Ovary (tissue), 10 donors: ENCODE measurements at regions of chr16 and their contacts with region 1.

Region 1: GRCh38 chr16:22297114-22297878 is at the start of gene POLR3E:
- DNase-seq: peak; percentile 99 to 100 (median 100)
- H3K4me3 ChIP-seq: peak within 1 kb of the TSS; percentile 95
- H3K27ac ChIP-seq: peak within 1 kb of the TSS; percentile 75 to 81
- H3K4me1 ChIP-seq: no peaks in the 10 kb centered on the region
- H3K27me3 ChIP-seq: no peaks in the 10 kb centered on the region
- CTCF ChIP-seq: peak; percentile 82 to 99 (median 99)
- EP300 ChIP-seq: no peak
- POLR2A ChIP-seq: peak; percentile 9
- total RNA-seq, gene POLR3E: 23.5 to 57.0 (median 40.8) TPM

Region 2: DNA sequence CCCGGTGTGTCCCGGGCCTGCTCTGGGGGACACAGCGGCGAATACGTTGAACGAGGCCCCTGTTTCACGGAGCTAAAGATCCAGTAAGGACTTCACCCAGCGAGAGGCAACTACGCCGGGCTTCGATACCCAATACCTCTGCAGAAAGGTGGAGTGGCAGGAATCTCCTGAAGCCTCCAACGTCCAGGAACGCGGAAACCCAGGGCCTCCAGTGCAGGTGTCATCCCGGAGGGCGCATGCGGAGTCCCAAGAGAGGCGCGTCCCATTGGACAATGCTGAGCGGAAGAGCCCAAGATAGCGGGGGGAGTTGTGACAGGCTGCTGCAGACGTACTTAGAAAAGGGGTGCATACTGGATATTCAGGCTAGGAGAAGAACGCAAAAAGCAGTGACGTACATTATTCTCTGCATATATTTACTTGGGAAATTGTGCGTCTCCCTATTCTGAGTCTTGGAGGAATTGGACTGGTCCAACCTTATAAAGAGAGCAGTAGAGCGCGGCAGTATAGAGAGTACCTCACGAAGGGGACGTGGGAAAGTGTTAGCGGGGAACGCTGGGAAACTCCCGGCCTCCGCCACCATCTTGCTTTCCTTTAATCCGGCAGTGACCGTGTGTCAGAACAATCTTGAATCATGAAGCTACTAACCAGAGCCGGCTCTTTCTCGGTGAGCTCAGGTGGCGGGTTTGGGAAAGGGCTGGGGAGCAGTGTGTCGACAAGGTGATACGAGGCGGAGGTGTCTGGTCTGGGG is 344.3 kb before region 1 on chr16 and contains the start of gene UQCRC2:
- intact Hi-C with region 1: loop called in 1 of 4 experiments (anchors 5 kb)
- DNase-seq: peak; percentile 81 to 87 (median 83)
- H3K4me3 ChIP-seq: peak within 1 kb of the TSS; percentile 62
- H3K27ac ChIP-seq: peak within 1 kb of the TSS; percentile 62 to 91
- H3K4me1 ChIP-seq: peaks cover 6% of the 10 kb centered on the region
- H3K27me3 ChIP-seq: no peaks in the 10 kb centered on the region
- CTCF ChIP-seq: peak in 1 of 3 donors; percentile 32
- EP300 ChIP-seq: no peak
- POLR2A ChIP-seq: peak; percentile 41
- total RNA-seq, gene UQCRC2: 101 to 226 (median 164) TPM

Region 3: DNA sequence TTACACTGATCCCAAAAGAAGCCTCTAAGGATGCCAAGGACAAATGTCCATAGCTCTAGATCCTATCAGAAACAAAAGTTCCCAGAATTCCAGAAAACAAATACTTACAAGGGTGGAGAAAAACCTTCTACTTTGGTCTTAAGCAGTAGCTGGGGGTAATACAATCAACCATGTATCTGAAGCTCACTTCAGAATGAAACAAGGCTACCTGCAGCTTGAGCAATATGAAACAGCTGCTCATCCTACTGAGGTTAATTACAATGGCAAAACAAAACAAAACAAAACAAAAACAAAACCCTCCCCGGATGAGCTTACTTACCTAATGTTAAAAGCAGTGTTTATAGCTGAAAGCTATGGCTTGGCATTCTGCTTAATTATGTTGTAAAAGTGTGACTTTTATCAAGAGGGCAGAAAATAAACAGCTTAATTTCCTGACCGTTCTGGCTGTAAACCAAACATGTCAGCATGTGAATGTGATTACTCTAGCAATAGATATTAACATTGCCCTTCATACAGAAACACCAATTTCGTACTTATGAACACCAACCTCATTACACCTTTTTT is 306.8 kb before region 1 on chr16:
- intact Hi-C with region 1: no loop called
- DNase-seq: no peak
- H3K4me3 ChIP-seq: no peak overlapping the region
- H3K27ac ChIP-seq: no peak overlapping the region
- H3K4me1 ChIP-seq: peaks cover 2% of the 10 kb centered on the region
- H3K27me3 ChIP-seq: no peaks in the 10 kb centered on the region
- CTCF ChIP-seq: no peak
- EP300 ChIP-seq: no peak
- POLR2A ChIP-seq: no peak

Region 4: DNA sequence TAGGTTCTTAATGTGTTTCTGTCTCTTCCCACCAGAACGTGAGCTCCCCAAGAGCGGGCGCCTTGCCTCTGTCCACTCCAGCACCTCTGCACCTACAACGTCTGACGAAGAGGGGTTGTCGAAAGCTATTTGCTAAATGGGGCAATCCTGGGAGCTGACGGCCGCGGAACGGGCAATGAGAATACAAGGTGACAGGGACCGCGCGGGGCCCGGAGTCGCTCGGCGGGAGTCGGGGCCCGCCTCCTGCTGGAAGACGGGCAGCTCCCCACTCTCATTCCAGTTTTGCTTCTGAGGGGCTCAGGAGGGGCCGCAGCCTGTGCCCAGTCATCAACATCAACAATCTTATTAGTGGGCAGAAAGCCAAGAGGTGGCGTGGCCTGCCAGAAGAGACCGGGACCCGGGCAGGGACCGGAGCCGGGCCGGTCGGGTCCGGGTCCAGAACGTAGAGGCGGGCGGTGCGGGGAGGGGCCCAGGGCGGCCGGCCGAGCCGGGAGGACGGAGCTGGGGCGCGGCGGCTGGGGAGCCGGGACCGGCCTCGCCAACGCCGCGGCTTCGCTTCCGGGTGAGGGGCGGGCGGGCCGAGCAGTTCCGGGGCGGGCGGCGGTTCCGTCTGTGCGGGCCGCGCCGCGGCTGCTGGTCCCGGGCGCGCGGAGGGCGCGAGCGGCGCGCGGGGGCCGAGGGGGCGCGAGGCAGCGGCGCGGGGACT is 289.6 kb before region 1 on chr16 and contains the start of gene MOSMO:
- intact Hi-C with region 1: loop called (anchors 10 kb)
- DNase-seq: peak; percentile 66 to 85 (median 76)
- H3K4me3 ChIP-seq: peak within 1 kb of the TSS; percentile 57
- H3K27ac ChIP-seq: peak within 1 kb of the TSS in 1 of 2 donors; percentile 57
- H3K4me1 ChIP-seq: peaks cover 7% of the 10 kb centered on the region
- H3K27me3 ChIP-seq: no peaks in the 10 kb centered on the region
- CTCF ChIP-seq: peak in 2 of 3 donors; percentile 15 to 31
- EP300 ChIP-seq: no peak
- POLR2A ChIP-seq: peak; percentile 33
- total RNA-seq, gene MOSMO: 14.3 to 33.3 (median 20.7) TPM

Region 5: DNA sequence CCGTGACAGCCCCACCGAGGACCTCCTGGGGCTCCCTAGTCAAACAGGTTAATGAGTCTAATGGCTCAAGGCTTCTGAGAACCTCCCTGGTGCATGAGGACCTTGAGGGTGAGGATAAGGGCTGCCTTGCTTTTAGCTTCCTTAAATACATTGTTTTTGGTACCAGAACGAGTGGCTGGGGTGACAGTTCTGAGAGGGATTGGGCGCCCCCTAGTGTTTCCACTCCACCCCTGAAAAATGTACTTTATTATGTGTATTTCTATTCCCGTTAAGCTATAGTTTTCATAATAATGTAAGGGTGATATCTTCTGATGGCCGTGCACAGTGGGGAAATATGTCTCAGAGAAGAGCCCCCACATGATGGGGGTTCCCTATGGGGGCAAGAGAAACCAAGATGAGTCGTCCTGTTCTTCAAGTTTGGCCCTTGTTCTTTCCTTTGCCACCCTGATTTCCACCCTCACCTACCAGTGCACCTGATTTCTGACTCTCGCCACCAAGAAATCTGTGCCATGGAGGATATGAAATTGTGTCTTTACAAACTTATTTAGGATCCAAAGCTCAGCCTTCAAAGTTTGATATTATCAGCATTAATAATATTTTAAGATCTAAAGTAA is 219.5 kb before region 1 on chr16:
- intact Hi-C with region 1: loop called in 1 of 4 experiments (anchors 10 kb)
- DNase-seq: peak; percentile 28 to 72 (median 65)
- H3K4me3 ChIP-seq: no peak overlapping the region
- H3K27ac ChIP-seq: no peak overlapping the region
- H3K4me1 ChIP-seq: peaks cover 3% of the 10 kb centered on the region
- H3K27me3 ChIP-seq: no peaks in the 10 kb centered on the region
- CTCF ChIP-seq: peak; percentile 54 to 61 (median 56)
- EP300 ChIP-seq: no peak
- POLR2A ChIP-seq: no peak

Region 6: GRCh38 chr16:22195695-22196558 is 101.4 kb before region 1 on chr16:
- intact Hi-C with region 1: loop called in 2 of 4 experiments (anchors 5 kb)
- DNase-seq: peak; percentile 86 to 97 (median 94)
- H3K4me3 ChIP-seq: peak overlapping the region; percentile 51
- H3K27ac ChIP-seq: peak overlapping the region; percentile 32 to 54
- H3K4me1 ChIP-seq: peaks cover 3% of the 10 kb centered on the region
- H3K27me3 ChIP-seq: no peaks in the 10 kb centered on the region
- CTCF ChIP-seq: peak; percentile 88 to 93 (median 90)
- EP300 ChIP-seq: no peak
- POLR2A ChIP-seq: peak; percentile 43

Region 7: DNA sequence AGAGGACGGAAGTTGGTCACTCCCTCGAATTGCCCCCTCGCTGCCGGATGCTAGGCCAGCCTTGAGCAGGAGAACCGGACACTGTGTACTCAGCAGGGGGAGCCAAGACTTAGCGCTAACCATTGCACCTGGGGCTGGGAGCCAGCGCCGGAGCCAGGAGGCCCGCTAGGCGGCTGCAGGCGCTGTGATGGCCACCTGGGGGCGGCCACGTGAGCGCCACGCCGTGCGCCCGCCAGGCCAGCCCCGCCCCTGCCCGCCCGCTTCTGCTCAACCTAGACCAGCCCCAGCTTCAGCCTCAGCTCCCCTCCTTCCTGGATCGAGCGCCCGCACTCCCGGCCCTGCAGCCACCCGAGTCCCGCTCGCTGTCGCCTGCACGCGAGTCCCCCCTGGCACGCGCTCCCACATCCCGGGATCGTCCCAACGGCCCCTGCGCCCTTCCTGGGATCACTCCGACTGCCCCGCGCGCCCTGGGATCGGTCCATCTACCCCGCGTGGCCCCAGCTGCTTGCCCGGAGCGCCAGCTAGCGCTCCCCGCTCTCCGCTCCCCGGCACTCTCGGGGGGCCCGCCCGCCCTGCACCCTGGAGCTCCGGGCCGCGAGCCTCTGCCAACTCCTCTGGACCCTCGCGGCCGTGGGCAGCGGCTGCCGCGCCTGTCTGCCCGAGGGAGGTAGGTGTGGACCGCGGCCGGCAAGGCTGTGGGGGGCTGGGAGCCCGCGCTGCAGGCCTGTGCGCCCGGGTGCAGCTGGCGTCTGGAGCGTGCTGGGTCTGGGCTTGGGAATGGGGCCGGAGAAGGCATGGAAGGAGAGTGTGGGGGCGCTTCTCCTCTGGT is 91.1 kb before region 1 on chr16 and contains the start of gene EEF2K:
- intact Hi-C with region 1: loop called in 2 of 4 experiments (anchors 2 to 5 kb)
- DNase-seq: peak; percentile 92 to 96 (median 94)
- H3K4me3 ChIP-seq: peak within 1 kb of the TSS; percentile 93
- H3K27ac ChIP-seq: peak within 1 kb of the TSS; percentile 67 to 79
- H3K4me1 ChIP-seq: peaks cover 10% of the 10 kb centered on the region
- H3K27me3 ChIP-seq: no peaks in the 10 kb centered on the region
- CTCF ChIP-seq: peak; percentile 66 to 97 (median 93)
- EP300 ChIP-seq: no peak
- POLR2A ChIP-seq: peak; percentile 39
- total RNA-seq, gene EEF2K: 8.1 to 37.6 (median 28.0) TPM

Region 8: DNA sequence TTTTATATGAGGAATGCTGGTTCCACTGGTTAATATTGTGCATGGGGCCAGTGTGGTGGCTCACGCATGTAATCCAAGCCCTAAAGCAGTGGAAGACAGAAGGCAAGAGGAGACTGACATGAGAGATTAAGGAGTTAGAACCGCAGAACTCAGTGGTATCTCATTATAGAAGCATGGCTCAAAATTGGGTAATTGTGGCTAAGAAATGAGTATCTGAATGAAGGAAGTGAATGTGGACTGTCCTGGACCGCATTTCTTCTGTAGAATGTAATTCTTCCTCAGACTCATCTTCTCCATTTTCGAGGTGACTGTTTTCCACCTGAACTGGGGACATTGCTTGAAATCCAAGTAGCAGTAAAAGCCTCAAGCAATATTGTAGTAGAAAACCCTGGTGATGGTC is 119.7 kb after region 1 on chr16:
- intact Hi-C with region 1: no loop called
- DNase-seq: no peak
- H3K4me3 ChIP-seq: no peak overlapping the region
- H3K27ac ChIP-seq: no peak overlapping the region
- H3K4me1 ChIP-seq: no peaks in the 10 kb centered on the region
- H3K27me3 ChIP-seq: no peaks in the 10 kb centered on the region
- CTCF ChIP-seq: no peak
- EP300 ChIP-seq: no peak
- POLR2A ChIP-seq: no peak